RWPE1 (cell line): ENCODE measurements at regions of chr11 and their contacts with region 1.

Region 1: GRCh38 chr11:14907411-14908213 is 15.6 kb upstream of the CYP2R1 start:
- DNase-seq: no peak
- H3K27ac ChIP-seq: no peak overlapping the region
- CTCF ChIP-seq: no peak

Region 2: GRCh38 chr11:14789879-14790484 is 117.6 kb before region 1 on chr11:
- CTCF ChIA-PET with region 1: interaction called, 18 read pairs
- POLR2A ChIA-PET with region 1: no interaction called
- DNase-seq: no peak
- H3K27ac ChIP-seq: no peak overlapping the region
- CTCF ChIP-seq: peak; percentile 64

Region 3: DNA sequence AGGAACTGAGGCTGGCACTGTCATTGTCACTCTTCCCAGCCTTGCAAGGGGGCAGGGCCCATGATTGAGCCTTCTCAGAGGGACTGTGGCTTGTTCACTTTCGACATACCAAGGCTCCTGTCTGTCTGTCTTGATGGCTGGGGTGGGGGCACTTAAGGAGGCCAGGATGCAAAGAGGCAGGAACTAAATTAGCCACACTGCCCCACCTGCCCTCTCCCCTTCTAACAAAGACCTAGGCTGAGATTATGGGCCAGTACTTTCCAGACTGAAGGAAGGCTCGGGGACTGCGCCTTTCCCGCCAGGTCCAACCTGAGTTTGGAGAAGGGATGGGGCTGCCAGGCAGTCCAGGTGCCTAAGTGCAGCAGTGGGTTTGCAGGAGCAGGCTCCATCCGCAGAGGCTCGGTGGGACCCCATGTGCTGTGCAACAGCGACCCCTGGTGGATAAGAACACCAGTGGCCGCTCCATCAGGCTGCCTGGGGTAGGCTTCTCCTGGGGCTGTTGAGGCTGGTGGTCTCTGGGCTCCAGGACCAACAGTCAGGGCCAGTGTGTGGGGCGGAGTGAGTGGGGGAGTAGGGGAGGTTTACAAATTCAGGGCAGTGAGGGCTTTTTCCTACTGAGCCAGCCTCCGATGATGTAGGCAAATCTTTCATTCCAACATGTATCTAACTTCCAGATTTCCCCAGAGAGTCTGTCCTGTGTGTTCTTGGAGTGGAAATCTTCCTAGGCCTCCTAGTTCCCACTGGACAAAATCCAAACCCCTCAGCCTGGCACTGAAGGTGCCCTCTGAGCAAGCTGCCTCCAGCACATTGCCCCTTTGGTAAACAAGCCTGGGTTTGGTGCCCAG is 301.0 kb after region 1 on chr11:
- CTCF ChIA-PET with region 1: interaction called, 11 read pairs
- POLR2A ChIA-PET with region 1: no interaction called
- DNase-seq: peak; percentile 77
- H3K27ac ChIP-seq: no peak overlapping the region
- CTCF ChIP-seq: peak; percentile 59